AG04449 (cell line): ENCODE measurements at regions of chr16 and their contacts with region 1.

Region 1: GRCh38 chr16:3443108-3444031 is at the starts of genes NAA60 and ZNF597:
- DNase-seq: peak; percentile 72
- H3K4me3 ChIP-seq: peak within 1 kb of the TSS; percentile 73
- CTCF ChIP-seq: no peak

Region 2: GRCh38 chr16:3400779-3401688 is 42.3 kb before region 1 on chr16 and contains the starts of genes ZNF174 and ZSCAN32:
- CTCF ChIA-PET with region 1: no interaction called
- POLR2A ChIA-PET with region 1: interaction called, 13 read pairs
- DNase-seq: peak; percentile 94
- H3K4me3 ChIP-seq: peak within 1 kb of the TSS; percentile 92
- CTCF ChIP-seq: no peak

Region 3: DNA sequence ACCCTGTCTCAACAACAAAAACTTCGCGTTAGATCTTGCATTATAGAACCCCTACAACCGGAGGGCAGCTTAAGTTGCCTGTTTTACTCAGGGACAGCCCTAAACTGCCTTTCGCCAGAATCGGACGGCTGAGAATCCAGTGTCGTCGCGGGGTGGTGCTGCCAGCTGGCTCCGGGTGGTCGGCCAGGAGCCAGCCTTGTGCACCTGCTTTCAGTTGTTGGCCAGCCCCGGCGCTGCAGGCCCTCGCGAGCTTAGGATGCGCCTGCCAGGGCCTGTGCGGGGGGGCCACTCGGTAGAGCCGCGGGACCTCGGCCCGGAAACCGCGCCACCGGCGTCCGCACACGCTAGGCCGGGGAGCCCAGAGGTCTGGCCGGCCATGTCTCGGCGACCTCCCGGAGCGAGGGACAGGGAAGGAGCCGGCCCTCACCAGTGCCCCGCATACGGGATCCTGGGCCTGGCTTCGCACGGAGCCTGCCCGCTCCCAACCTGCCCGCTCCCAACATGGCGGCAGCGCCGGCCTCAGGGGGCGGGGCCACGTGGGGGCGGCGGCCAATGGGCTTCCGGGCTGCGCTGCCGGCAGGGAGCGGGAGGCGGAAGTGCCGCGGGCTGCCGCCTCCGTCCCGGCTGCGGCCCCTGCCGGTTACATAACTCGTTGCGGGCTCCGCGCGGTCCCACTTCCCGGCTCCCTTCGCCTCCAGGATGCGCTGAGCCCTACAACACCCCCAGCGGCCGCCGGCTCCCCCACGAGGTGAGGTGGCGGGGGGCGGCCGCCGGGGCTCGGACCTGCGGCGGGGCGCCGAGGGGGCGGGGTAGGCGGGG is 14.3 kb after region 1 on chr16:
- CTCF ChIA-PET with region 1: interaction called, 4 read pairs
- POLR2A ChIA-PET with region 1: interaction called, 16 read pairs
- DNase-seq: no peak
- H3K4me3 ChIP-seq: peak overlapping the region; percentile 96
- CTCF ChIP-seq: peak; percentile 72